ENCODE measurements at regions of chr15 and their contacts with region 1.

Region 1: GRCh38 chr15:40807028-40807887 is at the starts of genes DNAJC17 and ZFYVE19:
- DNase-seq: peak; percentile 95 to 100 (median 98)

Region 2: DNA sequence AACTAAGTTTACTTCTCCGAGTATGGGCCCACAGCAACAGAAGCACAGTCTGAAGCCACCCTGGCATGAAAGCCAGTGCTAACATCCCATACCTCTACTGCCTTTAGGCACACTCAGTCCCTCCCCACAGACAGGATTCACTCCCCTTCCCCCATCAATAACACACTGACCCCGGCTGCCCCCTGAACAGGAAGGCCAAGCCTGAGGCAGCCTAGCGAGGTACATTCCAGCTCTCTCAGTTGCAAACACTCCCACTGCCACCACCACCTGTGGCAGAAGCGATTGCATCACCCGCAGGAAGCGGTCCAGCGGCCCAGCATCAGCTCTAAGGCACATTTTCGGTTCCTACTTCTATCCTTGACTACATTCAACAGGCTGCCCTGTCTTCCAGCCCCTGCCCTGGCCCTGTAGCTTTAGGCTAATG is 691.6 kb before region 1 on chr15:
- intact Hi-C with region 1: no loop called
- DNase-seq: peak in 2 of 10 donors; percentile 28 to 91

Region 3: DNA sequence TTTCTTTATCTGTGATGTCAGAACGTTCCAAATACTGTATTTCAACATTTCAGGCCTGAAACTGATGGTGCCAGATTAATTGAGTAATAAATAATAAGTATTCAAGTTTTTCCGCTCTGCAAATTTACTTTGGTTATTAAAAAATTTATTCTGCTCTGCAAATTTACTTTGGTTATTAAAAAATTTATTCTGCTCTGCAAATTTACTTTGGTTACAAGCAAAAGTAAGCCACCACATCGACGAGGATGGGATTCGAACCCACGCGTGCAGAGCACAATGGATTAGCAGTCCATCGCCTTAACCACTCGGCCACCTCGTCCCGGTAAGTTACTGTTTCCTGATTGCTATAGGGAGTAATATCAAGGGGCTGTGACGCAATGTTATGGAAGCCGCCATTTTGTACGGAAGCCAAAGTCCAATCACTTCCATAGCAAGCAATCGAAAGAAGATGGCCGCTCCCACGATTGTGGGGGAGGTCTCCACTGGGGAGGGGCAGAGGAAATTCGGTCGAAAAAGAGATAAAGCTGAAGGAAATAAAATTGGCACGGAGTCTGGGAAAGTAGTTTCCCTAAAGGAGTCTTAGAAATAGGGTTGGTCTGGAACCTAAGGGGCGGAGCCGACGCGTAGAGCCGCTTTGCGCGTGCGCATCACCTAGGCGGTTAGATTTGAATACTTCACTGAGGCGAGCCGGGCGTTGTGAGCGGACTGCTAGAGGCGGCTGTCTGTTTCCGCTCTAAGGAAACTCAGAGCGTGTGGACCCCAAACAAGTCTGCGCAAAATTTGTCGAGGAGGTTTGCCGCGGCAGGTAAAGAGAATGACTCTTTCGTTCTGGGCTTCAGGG is 213.4 kb before region 1 on chr15 and contains the start of gene KNL1:
- intact Hi-C with region 1: loop called (anchors 5 kb)
- DNase-seq: peak; percentile 82 to 98 (median 92)

Region 4: GRCh38 chr15:40694688-40695468 is 112.4 kb before region 1 on chr15 and contains the start of gene RAD51:
- intact Hi-C with region 1: loop called (anchors 1 kb)
- DNase-seq: peak; percentile 81 to 99 (median 90)

Region 5: GRCh38 chr15:40754883-40755811 is 52.1 kb before region 1 on chr15 and contains the start of gene RMDN3:
- intact Hi-C with region 1: loop called (anchors 1 kb)
- DNase-seq: peak; percentile 81 to 99 (median 90)

Measured in posterior cingulate gyrus (tissue), 11 donors.